Pancreas (tissue), 10 donors: ENCODE measurements at regions of chr3 and their contacts with region 1.

Region 1: GRCh38 chr3:78659386-78659987 is 1108.3 kb downstream of the ROBO1 start:
- DNase-seq: peak in 1 of 6 donors; percentile 18
- ATAC-seq: peak in 1 of 4 donors; percentile 32
- H3K4me3 ChIP-seq: no peak overlapping the region
- H3K27ac ChIP-seq: no peak overlapping the region
- H3K4me1 ChIP-seq: no peaks in the 10 kb centered on the region
- H3K27me3 ChIP-seq: peaks cover 0 to 6% (median 1%) of the 10 kb centered on the region in 4 donors
- CTCF ChIP-seq: peak in 3 of 4 donors; percentile 29 to 60 (median 44)

Region 2: DNA sequence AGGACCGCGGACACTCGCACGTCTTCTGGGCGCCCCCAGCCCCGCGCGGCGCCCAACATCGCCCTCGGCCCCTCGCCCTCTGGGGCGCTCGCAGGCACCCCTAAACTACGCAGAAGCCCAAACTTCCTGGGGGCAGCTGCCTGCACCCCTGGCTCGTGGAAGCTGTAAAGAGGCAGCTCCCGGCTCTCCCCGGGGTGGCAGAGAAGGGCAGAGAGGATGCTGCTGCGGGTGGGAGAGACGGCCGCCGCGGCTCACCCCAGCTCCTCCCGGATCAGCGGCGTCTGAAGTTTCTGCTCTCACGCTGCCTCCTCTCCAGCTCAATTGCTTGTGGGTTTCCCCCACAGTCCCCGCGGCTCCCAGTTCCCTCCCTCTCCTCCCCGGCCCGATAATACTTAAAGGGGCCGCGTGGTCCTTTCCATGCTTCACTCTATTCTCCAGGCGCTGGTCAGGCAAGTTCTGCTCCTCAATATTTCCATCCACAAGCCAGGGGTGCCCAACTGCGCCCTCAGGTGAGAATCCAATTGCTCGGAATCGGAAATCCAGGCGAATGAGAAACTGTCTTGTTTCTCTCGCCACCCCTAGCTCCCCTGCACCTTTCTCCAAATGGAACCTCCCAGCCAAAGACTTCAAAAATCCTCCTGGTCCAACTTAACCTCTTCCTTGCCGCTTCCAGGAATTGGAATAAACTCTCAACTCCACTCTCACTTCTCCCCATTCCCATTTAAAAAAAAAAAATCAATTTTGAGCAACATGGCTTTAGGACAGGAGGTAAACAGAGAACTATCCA is 359.8 kb after region 1 on chr3:
- intact Hi-C with region 1: loop called in 1 of 3 experiments (anchors 5 kb)
- DNase-seq: peak; percentile 30 to 76 (median 48)
- ATAC-seq: peak; percentile 74 to 90 (median 88)
- H3K4me3 ChIP-seq: peak overlapping the region; percentile 31 to 55 (median 40)
- H3K27ac ChIP-seq: peak overlapping the region in 3 of 4 donors; percentile 58 to 74 (median 59)
- H3K4me1 ChIP-seq: no peaks in the 10 kb centered on the region
- H3K27me3 ChIP-seq: peaks cover 0 to 4% (median 0%) of the 10 kb centered on the region in 4 donors
- CTCF ChIP-seq: no peak

Region 3: DNA sequence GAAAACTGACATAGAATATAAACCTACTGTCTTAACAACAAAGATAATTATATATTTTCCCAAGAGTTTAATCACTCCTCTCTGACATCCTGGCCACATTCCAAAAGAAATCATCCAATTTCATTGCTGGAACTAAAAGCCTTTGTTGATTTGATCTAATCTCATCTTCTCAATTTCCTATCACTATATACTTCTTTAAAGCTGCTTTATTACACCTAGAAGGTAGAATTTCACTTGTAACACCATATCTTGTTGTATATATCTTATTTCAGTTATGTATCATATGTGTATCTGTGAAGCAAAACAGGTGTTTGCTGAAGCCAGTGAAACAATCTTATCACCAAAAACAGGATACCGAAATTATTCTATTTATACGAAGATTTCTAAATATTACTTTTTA is 368.1 kb after region 1 on chr3:
- intact Hi-C with region 1: loop called in 1 of 3 experiments (anchors 5 kb)
- DNase-seq: no peak
- ATAC-seq: no peak
- H3K4me3 ChIP-seq: no peak overlapping the region
- H3K27ac ChIP-seq: no peak overlapping the region
- H3K4me1 ChIP-seq: no peaks in the 10 kb centered on the region
- H3K27me3 ChIP-seq: peaks cover 0 to 7% (median 0%) of the 10 kb centered on the region in 4 donors
- CTCF ChIP-seq: no peak